ENCODE measurements at regions of chr9 and their contacts with region 1.

Region 1: GRCh38 chr9:69054989-69055388 is 19.4 kb downstream of the FXN start:
- DNase-seq: no peak
- ATAC-seq: no peak
- H3K4me3 ChIP-seq: no peak overlapping the region
- H3K27ac ChIP-seq: no peak overlapping the region
- H3K4me1 ChIP-seq: no peaks in the 10 kb centered on the region
- H3K27me3 ChIP-seq: no peaks in the 10 kb centered on the region

Region 2: GRCh38 chr9:68981789-68982188 is 73.2 kb before region 1 on chr9:
- intact Hi-C with region 1: no loop called
- DNase-seq: no peak
- ATAC-seq: no peak
- H3K4me3 ChIP-seq: no peak overlapping the region
- H3K27ac ChIP-seq: no peak overlapping the region
- H3K4me1 ChIP-seq: no peaks in the 10 kb centered on the region
- H3K27me3 ChIP-seq: no peaks in the 10 kb centered on the region

Region 3: GRCh38 chr9:69149321-69149807 is 94.4 kb after region 1 on chr9:
- intact Hi-C with region 1: loop called in 1 of 2 experiments (anchors 2 kb)
- DNase-seq: no peak
- ATAC-seq: no peak
- H3K4me3 ChIP-seq: peak overlapping the region in 1 of 2 donors; percentile 26
- H3K27ac ChIP-seq: peak overlapping the region in 1 of 2 donors; percentile 74
- H3K4me1 ChIP-seq: peaks cover 0 to 2% of the 10 kb centered on the region in 2 donors
- H3K27me3 ChIP-seq: no peaks in the 10 kb centered on the region

Region 4: DNA sequence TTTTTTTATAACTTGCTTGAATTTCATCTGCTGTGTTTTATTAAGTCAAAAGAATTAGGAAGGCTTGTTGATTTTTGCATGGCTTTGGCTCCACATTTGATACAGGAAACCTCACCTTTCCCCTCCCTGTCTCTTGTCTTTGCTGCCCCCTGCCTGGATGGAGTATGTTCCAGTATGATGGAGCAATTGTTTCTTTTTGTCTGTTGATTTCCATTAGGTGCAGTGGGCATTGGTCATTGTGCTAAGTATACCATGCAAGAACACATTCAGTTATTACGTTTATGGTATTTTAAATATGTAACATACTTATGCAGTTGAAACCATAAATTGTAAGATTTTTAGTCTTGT is 138.7 kb after region 1 on chr9:
- intact Hi-C with region 1: loop called (anchors 1 to 2 kb)
- DNase-seq: no peak
- ATAC-seq: no peak
- H3K4me3 ChIP-seq: no peak overlapping the region
- H3K27ac ChIP-seq: no peak overlapping the region
- H3K4me1 ChIP-seq: peaks cover 2 to 7% of the 10 kb centered on the region in 2 donors
- H3K27me3 ChIP-seq: no peaks in the 10 kb centered on the region

Measured in aorta (tissue), 5 donors.